GM12878 (cell line): ENCODE measurements at regions of chr12 and their contacts with region 1.

Region 1: DNA sequence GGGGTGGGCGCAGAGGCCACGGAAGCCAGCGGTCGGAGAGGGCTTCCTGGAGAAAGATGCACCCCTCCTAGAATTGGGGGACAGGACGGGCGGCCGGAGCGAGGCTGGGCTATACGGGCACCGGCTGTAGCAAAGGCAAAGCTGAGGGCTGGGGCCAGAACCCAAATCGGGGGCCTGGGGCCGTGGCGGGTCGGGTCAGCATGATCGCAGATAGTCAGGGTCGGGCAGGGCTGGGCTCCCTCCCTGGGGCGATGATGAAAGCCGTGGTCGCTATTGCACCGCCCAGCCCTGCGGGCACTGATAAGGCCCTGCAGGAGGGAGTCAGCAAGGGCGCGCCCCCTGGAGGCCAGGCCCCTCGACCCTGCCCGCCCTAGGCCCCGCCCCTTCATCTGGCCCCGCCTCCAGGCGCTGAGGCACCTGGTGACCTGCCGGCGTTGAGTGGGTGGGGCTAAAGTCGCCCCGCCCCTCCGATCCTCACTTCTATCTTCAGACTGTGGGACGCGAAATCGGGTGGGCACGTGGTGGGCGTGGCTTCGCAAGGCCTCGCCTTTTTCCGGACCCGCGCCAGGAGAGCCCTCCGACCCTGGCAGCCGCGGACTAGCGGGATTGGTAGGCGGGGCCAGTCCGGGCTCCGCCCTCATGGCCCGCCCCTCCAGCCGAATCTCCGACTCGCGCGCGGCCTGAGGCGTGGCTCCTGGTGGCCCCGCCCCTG is 418 bp upstream of the SH2B3 start:
- DNase-seq: peak; percentile 86
- ATAC-seq: peak; percentile 70
- H3K4me3 ChIP-seq: peak overlapping the region; percentile 86
- H3K27ac ChIP-seq: peak overlapping the region; percentile 91
- H3K4me1 ChIP-seq: peaks cover 49% of the 10 kb centered on the region
- H3K27me3 ChIP-seq: no peaks in the 10 kb centered on the region
- CTCF ChIP-seq: peak; percentile 60 to 70 (median 64); a peak in 5 of 6 replicates
- EP300 ChIP-seq: no peak
- POLR2A ChIP-seq: peak; percentile 85
- RAD21 ChIP-seq: no peak

Region 2: GRCh38 chr12:111386885-111387284 is 18.4 kb before region 1 on chr12:
- CTCF ChIA-PET with region 1: no interaction called
- POLR2A ChIA-PET with region 1: no interaction called
- RAD21 ChIA-PET with region 1: no interaction called
- SMC1A ChIA-PET with region 1: no interaction called
- in situ Hi-C with region 1: no loop called
- intact Hi-C with region 1: no loop called
- DNase-seq: no peak
- ATAC-seq: no peak
- H3K4me3 ChIP-seq: no peak overlapping the region
- H3K27ac ChIP-seq: no peak overlapping the region
- H3K4me1 ChIP-seq: peaks cover 3% of the 10 kb centered on the region
- H3K27me3 ChIP-seq: no peaks in the 10 kb centered on the region; a peak in 1 of 4 replicates
- CTCF ChIP-seq: no peak
- EP300 ChIP-seq: no peak
- POLR2A ChIP-seq: no peak
- RAD21 ChIP-seq: no peak

Region 3: DNA sequence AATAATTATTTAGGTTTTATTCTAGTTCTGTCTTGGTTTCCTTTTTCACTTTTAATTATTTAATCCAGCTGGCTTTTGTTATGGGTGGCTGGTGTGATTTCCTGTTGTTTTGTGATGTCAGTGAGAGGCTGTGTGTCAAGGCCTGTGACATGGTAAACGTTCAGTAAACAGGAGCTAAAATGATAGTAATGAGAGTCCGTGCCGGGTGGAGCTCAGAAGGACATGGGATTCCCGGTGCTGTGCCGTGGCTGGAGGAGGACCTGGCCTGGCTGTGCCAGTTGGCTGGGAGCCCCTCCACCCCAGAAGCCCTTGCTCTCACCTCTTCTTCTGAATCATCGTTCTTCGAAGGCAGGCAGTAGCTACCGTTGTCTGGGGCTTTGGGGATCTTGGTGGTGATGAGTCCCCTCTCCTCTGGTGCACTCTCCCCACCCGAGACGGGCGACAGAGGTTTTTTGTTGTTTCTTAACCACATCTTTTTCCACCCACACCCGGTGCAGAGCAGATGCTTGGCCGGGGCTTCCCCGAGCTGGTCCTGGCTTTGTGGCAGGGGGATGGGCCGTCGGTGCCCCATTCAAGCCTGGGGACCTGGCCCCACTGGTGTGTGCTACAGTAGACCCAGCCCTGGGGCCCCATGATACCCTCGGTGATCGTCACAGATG is 29.5 kb after region 1 on chr12:
- CTCF ChIA-PET with region 1: interaction called, 1,117 read pairs
- POLR2A ChIA-PET with region 1: interaction called, 188 read pairs
- RAD21 ChIA-PET with region 1: interaction called, 804 read pairs
- SMC1A ChIA-PET with region 1: interaction called, 57 read pairs
- in situ Hi-C with region 1: no loop called
- intact Hi-C with region 1: loop called (anchors 2 kb)
- DNase-seq: peak; percentile 84
- ATAC-seq: peak; percentile 72
- H3K4me3 ChIP-seq: peak overlapping the region; percentile 65
- H3K27ac ChIP-seq: peak overlapping the region; percentile 95
- H3K4me1 ChIP-seq: peaks cover 91% of the 10 kb centered on the region
- H3K27me3 ChIP-seq: no peaks in the 10 kb centered on the region
- CTCF ChIP-seq: no peak
- EP300 ChIP-seq: peak; percentile 47 to 60; a peak in 3 of 4 replicates
- POLR2A ChIP-seq: peak; percentile 67
- RAD21 ChIP-seq: no peak

Region 4: DNA sequence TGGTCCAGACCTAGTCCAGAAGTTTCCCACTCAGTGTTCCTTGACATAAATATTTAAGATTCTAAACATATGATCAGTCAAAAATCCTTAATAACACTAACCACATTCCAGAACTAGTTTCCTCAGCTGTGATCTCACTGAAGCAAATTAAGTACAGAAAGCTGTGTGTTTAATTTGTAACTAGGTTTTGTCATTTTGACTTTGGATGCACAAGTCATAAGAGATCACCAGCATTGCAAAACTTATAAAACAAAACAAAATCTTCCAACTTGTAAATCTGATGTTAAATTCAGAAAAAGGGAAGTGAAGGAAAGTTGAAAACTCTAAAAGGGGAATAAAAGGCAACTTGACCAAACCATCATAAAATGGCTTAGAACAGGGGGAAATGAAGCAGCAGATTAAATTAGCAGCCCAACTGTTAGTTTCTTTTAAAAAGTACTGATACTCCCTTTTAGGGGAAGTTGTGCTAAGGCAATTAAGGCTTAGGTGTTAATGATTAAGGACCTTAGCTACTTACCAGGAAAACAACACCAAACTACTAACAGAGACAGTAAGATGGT is 57.0 kb after region 1 on chr12:
- CTCF ChIA-PET with region 1: interaction called, 1,117 read pairs
- POLR2A ChIA-PET with region 1: interaction called, 4 read pairs
- RAD21 ChIA-PET with region 1: interaction called, 10 read pairs
- SMC1A ChIA-PET with region 1: interaction called, 605 read pairs
- in situ Hi-C with region 1: no loop called
- intact Hi-C with region 1: no loop called
- DNase-seq: no peak
- ATAC-seq: peak; percentile 80
- H3K4me3 ChIP-seq: no peak overlapping the region
- H3K27ac ChIP-seq: no peak overlapping the region
- H3K4me1 ChIP-seq: no peaks in the 10 kb centered on the region
- H3K27me3 ChIP-seq: no peaks in the 10 kb centered on the region
- CTCF ChIP-seq: no peak
- EP300 ChIP-seq: no peak
- POLR2A ChIP-seq: no peak
- RAD21 ChIP-seq: no peak

Region 5: GRCh38 chr12:111529424-111530368 is 124.4 kb after region 1 on chr12:
- CTCF ChIA-PET with region 1: interaction called, 118 read pairs
- POLR2A ChIA-PET with region 1: no interaction called
- RAD21 ChIA-PET with region 1: interaction called, 4 read pairs
- SMC1A ChIA-PET with region 1: interaction called, 7 read pairs
- in situ Hi-C with region 1: no loop called
- intact Hi-C with region 1: no loop called
- DNase-seq: peak; percentile 24
- ATAC-seq: peak; percentile 95
- H3K4me3 ChIP-seq: no peak overlapping the region
- H3K27ac ChIP-seq: no peak overlapping the region
- H3K4me1 ChIP-seq: no peaks in the 10 kb centered on the region
- H3K27me3 ChIP-seq: no peaks in the 10 kb centered on the region
- CTCF ChIP-seq: peak; percentile 63 to 71 (median 64)
- EP300 ChIP-seq: no peak
- POLR2A ChIP-seq: no peak
- RAD21 ChIP-seq: peak; percentile 70